Endothelial cell of umbilical vein (primary cell): ENCODE measurements at regions of chr16 and their contacts with region 1.

Region 1: DNA sequence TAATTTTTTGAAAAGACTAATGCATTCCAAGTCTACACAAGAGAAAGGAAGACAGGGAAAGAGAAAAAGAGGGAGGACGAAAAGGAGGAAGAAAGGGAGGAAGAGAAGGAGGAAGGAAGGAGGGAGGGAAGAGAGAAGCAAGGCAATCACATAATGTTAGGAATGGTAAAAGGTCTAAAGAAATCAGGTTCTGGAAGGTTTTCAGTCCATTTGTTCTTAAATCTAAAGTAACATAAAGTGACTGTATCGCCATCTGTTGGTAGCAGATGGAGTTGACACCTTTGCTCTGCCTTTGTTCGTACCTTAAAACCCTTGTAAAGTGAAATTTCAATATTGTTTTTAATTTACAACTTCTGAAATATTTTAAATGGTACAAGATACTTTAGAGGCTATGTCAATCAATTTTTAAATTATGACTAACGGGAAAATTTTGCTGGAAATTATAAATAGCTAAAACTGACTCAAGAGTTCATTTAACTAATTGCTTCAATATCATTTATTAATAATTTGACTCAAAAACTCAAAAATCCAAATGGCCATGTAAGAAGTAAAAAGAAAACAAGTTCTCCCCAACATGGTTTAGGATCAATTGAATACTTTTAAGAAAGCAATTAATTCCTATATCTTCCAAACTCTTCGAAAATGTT is 20.4 kb upstream of the CDYL2 start:
- DNase-seq: peak; percentile 79
- H3K4me3 ChIP-seq: no peak overlapping the region
- H3K27ac ChIP-seq: no peak overlapping the region
- H3K4me1 ChIP-seq: no peaks in the 10 kb centered on the region
- H3K27me3 ChIP-seq: no peaks in the 10 kb centered on the region
- CTCF ChIP-seq: peak; percentile 52 to 56
- POLR2A ChIP-seq: no peak

Region 2: DNA sequence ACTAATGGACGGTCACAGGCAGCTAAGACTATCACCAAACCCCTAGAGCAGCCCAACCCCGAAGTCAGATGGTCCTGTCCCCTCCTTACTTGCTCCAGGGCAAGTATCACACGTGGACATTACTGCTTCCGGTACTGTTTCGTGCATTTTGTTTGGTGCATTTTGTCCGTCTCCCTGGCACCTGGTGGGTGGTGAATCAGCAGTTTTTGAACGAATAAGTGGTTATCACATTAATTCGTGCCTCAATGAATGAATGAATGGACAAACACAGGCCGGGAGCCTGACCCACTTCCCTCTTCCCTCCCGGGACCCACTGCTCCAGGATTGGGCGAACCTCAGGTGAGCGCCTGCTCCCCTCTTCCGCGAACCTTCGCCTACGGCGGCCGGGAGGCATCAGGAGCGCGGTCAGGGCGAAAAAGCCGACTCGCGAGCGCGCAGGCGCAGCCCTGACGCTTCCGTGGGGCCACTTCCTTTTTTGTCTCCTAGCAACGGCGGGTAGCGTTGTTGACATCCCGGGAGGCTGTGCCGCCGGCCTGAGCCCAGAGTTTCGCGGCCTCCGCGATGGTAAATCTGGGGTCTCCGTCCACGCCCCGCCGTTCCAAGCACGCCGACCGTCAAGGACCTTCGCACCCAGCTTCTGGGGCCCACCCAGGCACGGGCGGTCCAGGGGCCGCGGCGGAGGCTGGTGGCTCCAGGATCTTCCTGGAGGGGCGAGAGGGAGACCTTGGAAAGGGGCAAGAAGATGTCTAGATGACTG is 284.1 kb before region 1 on chr16 and contains the start of gene DYNLRB2:
- CTCF ChIA-PET with region 1: no interaction called
- POLR2A ChIA-PET with region 1: no interaction called
- dilution Hi-C with region 1: no loop called
- intact Hi-C with region 1: loop called (anchors 5 kb)
- DNase-seq: peak; percentile 89
- H3K4me3 ChIP-seq: peak within 1 kb of the TSS; percentile 55 to 84 (median 61)
- H3K27ac ChIP-seq: peak within 1 kb of the TSS; percentile 59
- H3K4me1 ChIP-seq: peaks cover 10% of the 10 kb centered on the region
- H3K27me3 ChIP-seq: peaks cover 2 to 22% of the 10 kb centered on the region in 2 experiments
- CTCF ChIP-seq: no peak
- POLR2A ChIP-seq: peak; percentile 66
- total RNA-seq, gene DYNLRB2: not detected in 2 replicates